ENCODE measurements at regions of chrX and their contacts with region 1.

Region 1: GRCh38 chrX:103686199-103687072 is at the start of gene MORF4L2:
- DNase-seq: peak; percentile 91
- ATAC-seq: peak; percentile 91
- H3K4me3 Mint-ChIP-seq: no peak within 1 kb of the TSS
- H3K27ac Mint-ChIP-seq: peak within 1 kb of the TSS; percentile 94
- H3K4me1 Mint-ChIP-seq: peaks cover 9% of the 10 kb centered on the region
- H3K27me3 Mint-ChIP-seq: no peaks in the 10 kb centered on the region
- total RNA-seq, gene MORF4L2: 239 to 257 TPM

Region 2: GRCh38 chrX:103214870-103215424 is 471.5 kb before region 1 on chrX and contains the start of gene BEX4:
- CTCF ChIA-PET with region 1: no interaction called
- POLR2A ChIA-PET with region 1: no interaction called
- intact Hi-C with region 1: loop called in 1 of 2 experiments (anchors 10 kb)
- DNase-seq: peak; percentile 89
- ATAC-seq: peak; percentile 98
- H3K4me3 Mint-ChIP-seq: peak within 1 kb of the TSS; percentile 75
- H3K27ac Mint-ChIP-seq: peak within 1 kb of the TSS; percentile 69
- H3K4me1 Mint-ChIP-seq: peaks cover 3% of the 10 kb centered on the region
- H3K27me3 Mint-ChIP-seq: no peaks in the 10 kb centered on the region
- total RNA-seq, gene BEX4: 9.9 to 10.0 TPM

Region 3: DNA sequence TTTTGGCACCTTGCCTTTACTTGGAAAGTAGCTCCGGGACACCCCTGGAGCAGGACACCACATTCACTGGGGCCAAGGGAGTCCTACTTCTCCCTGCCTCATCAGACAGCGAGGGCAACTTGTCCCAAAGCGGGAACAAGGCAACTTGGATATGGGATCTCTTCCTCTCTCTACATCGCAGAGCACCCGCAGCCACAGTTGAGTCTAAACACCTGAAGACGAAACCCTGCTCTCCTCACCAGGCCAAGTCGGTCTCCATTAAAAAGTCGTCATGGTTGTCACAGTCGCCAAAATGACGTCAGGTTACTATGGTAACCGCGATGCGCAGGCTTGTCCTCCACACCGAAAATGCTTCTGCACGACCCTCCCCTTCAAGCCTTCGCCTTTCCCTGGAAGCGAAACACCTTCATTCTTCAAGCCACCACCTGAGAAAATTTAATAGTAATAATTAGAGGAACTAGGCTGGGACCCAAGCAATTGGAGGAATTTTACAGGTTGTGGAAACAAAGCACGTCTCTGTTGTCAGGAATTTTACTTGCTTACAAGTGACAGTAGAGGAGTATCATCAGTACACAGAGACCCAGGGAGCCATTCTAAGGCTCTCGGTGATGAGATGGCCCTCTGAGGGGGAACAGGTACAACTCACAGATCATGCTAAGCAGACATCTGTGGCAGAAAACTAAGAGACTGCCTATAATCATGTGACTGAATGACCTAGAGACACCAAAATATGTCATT is 131.6 kb before region 1 on chrX:
- CTCF ChIA-PET with region 1: no interaction called
- POLR2A ChIA-PET with region 1: no interaction called
- intact Hi-C with region 1: loop called in 1 of 2 experiments (anchors 2 kb)
- DNase-seq: peak; percentile 81
- ATAC-seq: peak; percentile 86
- H3K4me3 Mint-ChIP-seq: peak overlapping the region; percentile 89
- H3K27ac Mint-ChIP-seq: peak overlapping the region; percentile 90
- H3K4me1 Mint-ChIP-seq: peaks cover 3% of the 10 kb centered on the region
- H3K27me3 Mint-ChIP-seq: no peaks in the 10 kb centered on the region

Region 4: GRCh38 chrX:103629318-103630170 is 56.9 kb before region 1 on chrX:
- CTCF ChIA-PET with region 1: interaction called, 3 read pairs
- POLR2A ChIA-PET with region 1: no interaction called
- intact Hi-C with region 1: loop called (anchors 1 to 5 kb)
- DNase-seq: peak; percentile 55
- ATAC-seq: peak; percentile 58
- H3K4me3 Mint-ChIP-seq: peak overlapping the region; percentile 81
- H3K27ac Mint-ChIP-seq: peak overlapping the region; percentile 87
- H3K4me1 Mint-ChIP-seq: peaks cover 18% of the 10 kb centered on the region
- H3K27me3 Mint-ChIP-seq: no peaks in the 10 kb centered on the region

Region 5: GRCh38 chrX:103789004-103789403 is 102.6 kb after region 1 on chrX:
- CTCF ChIA-PET with region 1: no interaction called
- POLR2A ChIA-PET with region 1: no interaction called
- intact Hi-C with region 1: no loop called
- DNase-seq: no peak
- ATAC-seq: no peak
- H3K4me3 Mint-ChIP-seq: no peak overlapping the region
- H3K27ac Mint-ChIP-seq: no peak overlapping the region
- H3K4me1 Mint-ChIP-seq: no peaks in the 10 kb centered on the region
- H3K27me3 Mint-ChIP-seq: peaks cover 3% of the 10 kb centered on the region

Region 6: DNA sequence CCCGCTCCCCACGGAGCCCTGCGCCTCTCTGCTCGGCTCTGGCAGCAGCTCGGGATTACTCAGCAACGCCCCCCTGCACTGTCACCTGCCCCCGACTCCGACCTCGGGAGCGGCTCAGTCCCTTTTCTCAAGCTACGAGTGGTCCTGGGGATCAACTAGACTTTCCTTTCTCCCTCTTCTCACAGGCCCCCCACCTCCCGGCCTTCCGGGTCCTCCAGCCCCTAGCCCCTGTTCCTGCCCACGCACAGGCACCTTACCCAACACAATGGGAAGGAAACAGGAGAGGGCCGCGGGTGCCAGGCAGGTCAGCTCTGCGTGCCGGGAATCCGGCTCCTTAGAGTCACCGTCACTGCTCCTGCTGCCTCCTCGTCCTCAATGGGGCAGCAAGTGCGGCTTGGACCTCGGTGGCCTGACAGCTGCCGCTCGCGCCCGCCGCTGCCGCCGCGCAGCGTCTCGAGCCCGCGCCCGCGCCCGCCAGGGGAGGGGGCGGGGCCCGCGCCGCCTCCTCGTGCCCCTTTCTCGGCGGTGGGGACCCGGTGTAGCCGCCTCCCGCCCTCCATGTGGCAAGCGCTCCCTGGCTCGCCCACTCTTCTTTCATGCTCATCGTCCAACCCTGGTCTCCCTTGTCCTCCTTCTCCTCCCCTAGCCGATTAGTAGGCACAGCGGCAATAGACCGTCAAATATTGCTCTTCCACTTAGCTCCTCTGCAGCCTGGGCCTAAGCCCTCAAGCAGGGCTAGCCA is 145.5 kb after region 1 on chrX and contains the start of gene RAB9B:
- CTCF ChIA-PET with region 1: interaction called, 3 read pairs
- POLR2A ChIA-PET with region 1: interaction called, 3 read pairs
- intact Hi-C with region 1: loop called in 1 of 2 experiments (anchors 5 kb)
- DNase-seq: peak; percentile 31
- ATAC-seq: peak; percentile 98
- H3K4me3 Mint-ChIP-seq: peak within 1 kb of the TSS; percentile 71
- H3K27ac Mint-ChIP-seq: peak within 1 kb of the TSS; percentile 72
- H3K4me1 Mint-ChIP-seq: peaks cover 6% of the 10 kb centered on the region
- H3K27me3 Mint-ChIP-seq: no peaks in the 10 kb centered on the region
- total RNA-seq, gene RAB9B: 0.37 to 0.48 TPM

Region 7: DNA sequence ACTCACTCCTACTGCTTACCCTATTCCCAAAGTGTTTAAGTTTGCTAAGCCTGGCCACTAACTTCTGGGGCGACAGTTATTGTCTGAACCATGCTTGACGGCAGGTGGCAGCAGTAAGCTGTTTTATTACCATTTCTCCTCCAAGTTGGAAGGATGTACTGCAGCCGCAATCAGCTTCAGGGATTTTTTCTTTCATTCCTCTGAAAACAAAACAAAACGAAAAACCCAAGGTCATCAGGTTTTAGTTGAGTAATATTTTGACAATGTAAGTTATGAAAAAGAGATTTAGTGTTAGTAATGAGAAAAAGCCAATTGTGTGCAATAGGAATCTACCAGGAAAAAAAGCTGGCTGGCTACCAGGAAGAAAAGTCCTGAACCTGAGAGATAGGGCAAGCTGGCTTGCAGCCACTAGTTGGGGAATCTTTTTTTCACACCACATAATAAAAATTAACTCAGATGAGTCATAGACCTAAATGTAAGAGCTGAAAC is 158.8 kb after region 1 on chrX:
- CTCF ChIA-PET with region 1: no interaction called
- POLR2A ChIA-PET with region 1: no interaction called
- intact Hi-C with region 1: no loop called
- DNase-seq: peak; percentile 67
- ATAC-seq: peak; percentile 76
- H3K4me3 Mint-ChIP-seq: no peak overlapping the region
- H3K27ac Mint-ChIP-seq: no peak overlapping the region
- H3K4me1 Mint-ChIP-seq: peaks cover 2% of the 10 kb centered on the region
- H3K27me3 Mint-ChIP-seq: peaks cover 2% of the 10 kb centered on the region

Region 8: DNA sequence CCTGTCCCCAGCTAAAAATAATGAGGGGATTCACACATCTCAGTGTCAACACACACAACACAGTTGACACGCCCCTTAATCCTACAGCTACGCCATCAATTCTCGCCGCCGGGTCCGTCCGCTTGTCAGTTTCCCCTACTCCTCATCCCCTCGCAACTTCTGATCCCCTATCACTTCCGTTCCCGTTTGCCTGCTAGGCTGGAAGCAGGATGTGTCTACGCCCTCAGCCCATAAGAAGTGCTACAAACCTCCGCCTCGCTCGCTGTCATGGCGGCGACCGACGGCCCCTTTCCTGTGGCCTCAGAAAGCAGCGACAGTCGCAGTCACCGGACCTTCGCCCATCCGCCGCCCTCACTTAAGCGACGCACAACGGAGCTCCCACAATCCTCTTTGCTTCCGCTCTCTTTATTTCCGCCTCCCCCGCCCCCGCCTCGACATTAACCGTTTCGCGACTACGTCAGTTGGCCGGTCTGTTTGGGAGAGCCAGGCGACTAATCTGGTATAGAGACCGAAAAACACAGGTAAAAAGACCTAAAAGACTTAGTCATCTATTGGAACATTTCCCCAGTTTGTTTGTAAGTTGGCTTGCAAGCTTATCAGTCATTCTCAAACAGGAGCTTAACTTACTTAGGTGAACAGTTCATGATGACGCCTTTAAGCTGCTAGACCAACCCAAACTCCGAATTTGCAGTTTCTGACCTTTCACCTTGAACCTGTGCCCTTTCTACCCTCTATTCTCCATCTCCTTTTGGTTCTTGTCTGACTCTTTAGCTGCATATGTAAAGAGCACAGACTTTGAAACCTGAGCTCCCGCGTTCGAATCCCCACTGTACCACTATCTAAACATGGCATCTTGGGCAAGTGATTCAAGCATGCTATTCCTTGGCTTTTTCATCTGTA is 470.4 kb after region 1 on chrX and contains the start of gene SLC25A53:
- CTCF ChIA-PET with region 1: no interaction called
- POLR2A ChIA-PET with region 1: interaction called, 3 read pairs
- intact Hi-C with region 1: loop called (anchors 2 to 5 kb)
- DNase-seq: peak; percentile 84
- ATAC-seq: peak; percentile 92
- H3K4me3 Mint-ChIP-seq: peak within 1 kb of the TSS; percentile 94
- H3K27ac Mint-ChIP-seq: peak within 1 kb of the TSS; percentile 99
- H3K4me1 Mint-ChIP-seq: peaks cover 11% of the 10 kb centered on the region
- H3K27me3 Mint-ChIP-seq: no peaks in the 10 kb centered on the region
- total RNA-seq, gene SLC25A53: 3.5 to 5.1 TPM